ENCODE measurements at regions of chr15 and their contacts with region 1.

Region 1: GRCh38 chr15:52331490-52332240 is 36.1 kb upstream of the MYO5C start:
- DNase-seq: no peak
- H3K4me3 ChIP-seq: no peak overlapping the region
- H3K27ac ChIP-seq: no peak overlapping the region
- H3K4me1 ChIP-seq: no peaks in the 10 kb centered on the region
- H3K27me3 ChIP-seq: no peaks in the 10 kb centered on the region
- CTCF ChIP-seq: no peak
- EP300 ChIP-seq: no peak
- POLR2A ChIP-seq: no peak

Region 2: DNA sequence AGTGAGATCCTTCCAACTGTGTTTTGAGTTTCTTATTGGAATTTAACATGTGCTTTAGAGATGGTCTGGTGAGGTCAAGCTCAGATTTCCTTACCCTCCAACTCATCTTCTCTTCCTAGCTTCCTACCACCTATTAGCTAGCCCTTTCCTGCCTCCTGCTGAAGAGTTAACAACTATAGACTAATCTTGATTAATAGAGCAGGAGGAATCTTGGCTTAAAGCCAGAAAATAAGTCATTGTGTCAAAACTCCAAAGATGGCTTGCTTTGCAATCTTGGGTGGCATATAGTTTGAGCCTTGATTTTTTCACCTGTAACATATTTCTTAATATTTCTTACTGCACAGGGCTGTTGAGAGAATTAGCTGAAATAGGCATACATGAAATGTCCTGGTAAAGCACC is 246.4 kb before region 1 on chr15:
- intact Hi-C with region 1: no loop called
- DNase-seq: no peak
- H3K4me3 ChIP-seq: no peak overlapping the region
- H3K27ac ChIP-seq: no peak overlapping the region
- H3K4me1 ChIP-seq: no peaks in the 10 kb centered on the region
- H3K27me3 ChIP-seq: no peaks in the 10 kb centered on the region
- CTCF ChIP-seq: no peak
- EP300 ChIP-seq: no peak
- POLR2A ChIP-seq: no peak

Region 3: DNA sequence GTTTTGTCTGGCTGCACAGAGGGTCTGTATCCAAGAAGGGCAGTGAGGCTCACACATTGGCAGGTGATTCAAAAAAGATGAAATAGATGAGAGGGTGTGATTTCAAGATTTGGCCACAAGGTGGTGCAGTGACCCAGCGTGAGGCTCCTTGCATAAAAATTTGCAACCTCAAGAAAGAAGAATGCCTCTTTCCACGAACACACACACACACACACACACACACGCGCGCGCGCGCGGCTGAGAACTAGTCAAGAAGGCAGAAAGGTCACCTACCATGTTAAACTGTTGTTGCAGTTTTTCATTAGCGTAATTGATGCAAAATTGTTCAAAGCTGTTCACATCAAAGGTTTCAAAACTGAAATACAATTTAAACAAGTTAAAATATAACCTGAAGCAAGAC is 75.3 kb before region 1 on chr15:
- intact Hi-C with region 1: loop called (anchors 10 kb)
- DNase-seq: peak; percentile 96
- H3K4me3 ChIP-seq: no peak overlapping the region
- H3K27ac ChIP-seq: no peak overlapping the region
- H3K4me1 ChIP-seq: peaks cover 17 to 22% (median 20%) of the 10 kb centered on the region in 4 donors
- H3K27me3 ChIP-seq: no peaks in the 10 kb centered on the region
- CTCF ChIP-seq: peak; percentile 78 to 81 (median 79)
- EP300 ChIP-seq: no peak
- POLR2A ChIP-seq: no peak